Activated naive CD4-positive, alpha-beta T cell treated with anti-CD3 and anti-CD28 coated beads, Interleukin-2, amount 10 ng/mL, durations not matched to agents 7 days and 5 days (primary cell): ENCODE measurements at regions of chr17 and their contacts with region 1.

Region 1: DNA sequence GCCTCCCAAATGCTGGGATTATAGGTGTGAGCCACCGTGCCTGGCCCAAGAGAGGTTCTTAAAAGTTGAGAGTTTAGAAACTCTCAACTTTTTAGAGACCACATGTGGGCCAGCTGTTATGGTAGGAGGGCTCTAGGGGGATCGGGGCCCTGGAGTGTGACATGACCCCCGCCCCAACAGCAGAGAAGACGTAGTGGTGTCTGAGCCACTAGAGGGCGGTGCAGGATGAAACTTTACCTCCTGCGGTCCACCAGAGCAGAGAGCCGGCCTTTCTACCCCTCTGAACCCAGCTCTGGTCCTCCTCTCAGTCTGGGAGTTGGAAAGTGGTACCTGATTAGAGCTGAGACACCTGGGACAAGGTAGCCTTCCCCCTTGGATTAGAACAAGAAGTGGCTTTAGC is 7.4 kb downstream of the CDK5RAP3 start:
- DNase-seq: peak; percentile 69
- H3K4me3 Mint-ChIP-seq: no peak overlapping the region
- H3K27ac Mint-ChIP-seq: no peak overlapping the region
- H3K4me1 Mint-ChIP-seq: peaks cover 9% of the 10 kb centered on the region
- H3K27me3 Mint-ChIP-seq: no peaks in the 10 kb centered on the region

Region 2: DNA sequence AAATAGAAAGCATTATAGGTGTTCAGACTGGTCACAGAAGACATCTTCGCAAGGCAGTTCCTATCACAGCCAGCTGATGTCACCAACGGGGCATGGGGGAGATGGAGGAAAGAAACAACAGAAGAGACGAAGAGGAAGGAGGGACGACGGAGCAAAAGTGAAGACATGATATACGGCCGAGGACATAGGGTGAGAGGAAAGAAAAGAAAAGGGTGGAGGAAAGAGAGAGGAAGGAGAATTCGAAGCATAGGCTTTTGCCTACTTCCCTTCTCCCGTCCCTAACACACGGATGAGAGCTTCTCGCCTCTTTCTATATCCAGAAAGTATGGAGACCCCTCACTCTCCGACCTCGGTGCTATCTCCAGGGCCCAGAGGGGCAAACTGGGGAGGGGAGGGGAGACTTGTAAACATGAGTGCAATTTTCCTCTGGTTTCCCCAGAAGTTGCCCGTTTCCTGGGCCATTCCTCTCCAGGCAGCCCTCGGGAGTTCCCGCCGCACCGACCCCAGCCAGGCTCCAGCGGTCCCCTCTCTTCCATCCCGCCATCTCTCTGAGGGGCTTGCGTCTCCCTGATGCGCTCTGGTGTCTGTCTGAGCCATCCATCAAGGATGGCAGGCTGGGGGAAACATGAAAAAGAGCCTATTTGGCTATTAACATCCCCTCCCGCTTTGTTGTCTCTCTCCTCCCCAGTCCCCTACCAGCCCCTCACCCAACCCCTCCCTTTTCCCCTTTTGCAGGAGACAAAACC is 33.3 kb after region 1 on chr17:
- CTCF ChIA-PET with region 1: interaction called, 110 read pairs
- DNase-seq: peak; percentile 73
- H3K4me3 Mint-ChIP-seq: peak overlapping the region; percentile 64
- H3K27ac Mint-ChIP-seq: no peak overlapping the region
- H3K4me1 Mint-ChIP-seq: peaks cover 30% of the 10 kb centered on the region
- H3K27me3 Mint-ChIP-seq: peaks cover 72% of the 10 kb centered on the region